Activated CD8-positive, alpha-beta T cell treated with anti-CD3 and anti-CD28 coated beads for 36 hours (primary cell): ENCODE measurements at regions of chr1 and their contacts with region 1.

Region 1: DNA sequence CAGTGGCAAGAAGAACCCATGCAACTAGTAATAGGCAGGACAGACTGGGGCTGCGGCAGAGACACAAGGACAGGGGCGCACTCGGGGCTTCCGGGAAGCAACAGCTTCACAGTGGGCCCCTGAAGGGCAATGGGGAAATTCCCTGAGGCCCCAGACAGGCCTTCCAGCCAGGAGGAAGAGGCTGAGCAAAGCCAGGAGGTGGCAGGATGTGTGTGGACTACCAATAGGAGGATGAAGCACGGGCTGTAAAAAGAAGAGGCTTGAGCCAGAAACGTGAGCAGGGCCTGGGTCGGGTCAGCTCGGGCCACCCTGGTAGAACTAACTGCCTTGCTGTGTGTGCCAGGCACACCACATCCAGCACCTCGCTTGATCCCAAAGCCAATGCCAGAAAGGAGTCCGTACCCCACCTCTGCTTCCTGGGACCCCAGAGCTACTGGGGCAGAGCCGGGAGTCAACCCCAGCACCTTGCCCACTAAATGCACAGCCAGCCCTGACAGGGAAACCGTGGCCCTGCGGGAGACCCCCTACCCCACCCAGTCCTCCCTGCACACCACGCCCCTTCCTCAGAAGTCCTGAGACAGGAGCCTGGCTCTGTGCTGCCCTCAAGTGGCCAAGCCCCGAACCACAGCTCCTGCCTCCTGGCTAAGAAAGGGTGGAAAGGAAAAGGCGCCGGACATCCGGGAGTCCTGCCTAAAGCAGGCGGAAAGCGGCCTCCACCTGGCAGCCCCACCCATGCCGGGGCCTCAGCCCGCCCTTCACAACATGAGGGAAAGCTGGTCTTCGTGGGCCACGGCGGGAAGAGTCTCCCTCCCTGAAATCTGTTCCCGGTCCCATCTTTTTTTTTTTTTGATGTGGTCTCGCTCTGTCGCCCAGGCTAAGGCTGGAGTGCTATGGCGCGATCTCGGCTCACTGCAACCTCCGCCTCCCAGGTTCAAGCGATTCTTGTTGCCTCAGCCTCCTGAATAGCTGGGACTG is 33.7 kb downstream of the TTC39A start:
- DNase-seq: peak; percentile 85
- ATAC-seq: peak; percentile 86
- H3K4me3 Mint-ChIP-seq: peak overlapping the region; percentile 65
- H3K27ac Mint-ChIP-seq: peak overlapping the region; percentile 49
- H3K4me1 Mint-ChIP-seq: peaks cover 28% of the 10 kb centered on the region
- H3K27me3 Mint-ChIP-seq: no peaks in the 10 kb centered on the region
- CTCF ChIP-seq: peak; percentile 95

Region 2: GRCh38 chr1:50929376-50929958 is 367.2 kb before region 1 on chr1:
- CTCF ChIA-PET with region 1: no interaction called
- POLR2A ChIA-PET with region 1: no interaction called
- intact Hi-C with region 1: no loop called
- DNase-seq: no peak
- ATAC-seq: no peak
- H3K4me3 Mint-ChIP-seq: no peak overlapping the region
- H3K27ac Mint-ChIP-seq: no peak overlapping the region
- H3K4me1 Mint-ChIP-seq: peaks cover 39% of the 10 kb centered on the region
- H3K27me3 Mint-ChIP-seq: no peaks in the 10 kb centered on the region
- CTCF ChIP-seq: peak; percentile 70

Region 3: GRCh38 chr1:51255331-51255730 is 41.3 kb before region 1 on chr1:
- CTCF ChIA-PET with region 1: interaction called, 11 read pairs
- POLR2A ChIA-PET with region 1: no interaction called
- intact Hi-C with region 1: no loop called
- DNase-seq: no peak
- ATAC-seq: no peak
- H3K4me3 Mint-ChIP-seq: no peak overlapping the region
- H3K27ac Mint-ChIP-seq: no peak overlapping the region
- H3K4me1 Mint-ChIP-seq: peaks cover 38% of the 10 kb centered on the region
- H3K27me3 Mint-ChIP-seq: no peaks in the 10 kb centered on the region
- CTCF ChIP-seq: no peak

Region 4: GRCh38 chr1:51268634-51269033 is 28.0 kb before region 1 on chr1:
- CTCF ChIA-PET with region 1: interaction called, 25 read pairs
- POLR2A ChIA-PET with region 1: no interaction called
- intact Hi-C with region 1: no loop called
- DNase-seq: no peak
- ATAC-seq: no peak
- H3K4me3 Mint-ChIP-seq: no peak overlapping the region
- H3K27ac Mint-ChIP-seq: peak overlapping the region; percentile 77
- H3K4me1 Mint-ChIP-seq: peaks cover 43% of the 10 kb centered on the region
- H3K27me3 Mint-ChIP-seq: no peaks in the 10 kb centered on the region
- CTCF ChIP-seq: no peak

Region 5: GRCh38 chr1:51310871-51311613 is 14.4 kb after region 1 on chr1:
- CTCF ChIA-PET with region 1: interaction called, 29 read pairs
- POLR2A ChIA-PET with region 1: interaction called, 3 read pairs
- intact Hi-C with region 1: no loop called
- DNase-seq: peak; percentile 19
- ATAC-seq: peak; percentile 55
- H3K4me3 Mint-ChIP-seq: no peak overlapping the region
- H3K27ac Mint-ChIP-seq: no peak overlapping the region
- H3K4me1 Mint-ChIP-seq: peaks cover 11% of the 10 kb centered on the region
- H3K27me3 Mint-ChIP-seq: no peaks in the 10 kb centered on the region
- CTCF ChIP-seq: no peak